CD8-positive, alpha-beta T cell (primary cell): ENCODE measurements at regions of chr3 and their contacts with region 1.

Region 1: GRCh38 chr3:33787328-33788009 is 11.0 kb upstream of the PDCD6IP start:
- DNase-seq: peak; percentile 16 to 83 (median 64)
- ATAC-seq: peak; percentile 87
- H3K4me3 ChIP-seq: no peak overlapping the region
- H3K4me3 Mint-ChIP-seq: peak overlapping the region; percentile 57
- H3K27ac ChIP-seq: no peak overlapping the region
- H3K27ac Mint-ChIP-seq: no peak overlapping the region
- H3K4me1 ChIP-seq: no peaks in the 10 kb centered on the region
- H3K4me1 Mint-ChIP-seq: peaks cover 2% of the 10 kb centered on the region
- H3K27me3 ChIP-seq: peaks cover 0 to 3% of the 10 kb centered on the region in 2 experiments
- H3K27me3 Mint-ChIP-seq: peaks cover 23% of the 10 kb centered on the region
- CTCF ChIP-seq: peak; percentile 89

Region 2: GRCh38 chr3:32947789-32948238 is 839.7 kb before region 1 on chr3:
- CTCF ChIA-PET with region 1: no interaction called
- POLR2A ChIA-PET with region 1: no interaction called
- intact Hi-C with region 1: loop called (anchors 5 to 10 kb)
- DNase-seq: peak; percentile 82 to 96 (median 87)
- ATAC-seq: peak; percentile 79
- H3K4me3 ChIP-seq: no peak overlapping the region
- H3K4me3 Mint-ChIP-seq: no peak overlapping the region
- H3K27ac ChIP-seq: no peak overlapping the region
- H3K27ac Mint-ChIP-seq: no peak overlapping the region
- H3K4me1 ChIP-seq: peaks cover 4% of the 10 kb centered on the region
- H3K4me1 Mint-ChIP-seq: peaks cover 16% of the 10 kb centered on the region
- H3K27me3 ChIP-seq: no peaks in the 10 kb centered on the region
- H3K27me3 Mint-ChIP-seq: no peaks in the 10 kb centered on the region
- CTCF ChIP-seq: peak; percentile 78

Region 3: GRCh38 chr3:33186524-33187367 is 600.7 kb before region 1 on chr3:
- CTCF ChIA-PET with region 1: no interaction called
- POLR2A ChIA-PET with region 1: no interaction called
- intact Hi-C with region 1: no loop called
- DNase-seq: no peak
- ATAC-seq: no peak
- H3K4me3 ChIP-seq: no peak overlapping the region
- H3K4me3 Mint-ChIP-seq: no peak overlapping the region
- H3K27ac ChIP-seq: no peak overlapping the region
- H3K27ac Mint-ChIP-seq: no peak overlapping the region
- H3K4me1 ChIP-seq: no peaks in the 10 kb centered on the region
- H3K4me1 Mint-ChIP-seq: no peaks in the 10 kb centered on the region
- H3K27me3 ChIP-seq: no peaks in the 10 kb centered on the region
- H3K27me3 Mint-ChIP-seq: peaks cover 15% of the 10 kb centered on the region
- CTCF ChIP-seq: no peak

Region 4: GRCh38 chr3:33372218-33373081 is 415.0 kb before region 1 on chr3:
- CTCF ChIA-PET with region 1: interaction called, 3 read pairs
- POLR2A ChIA-PET with region 1: no interaction called
- intact Hi-C with region 1: loop called in 1 of 2 experiments (anchors 2 kb)
- DNase-seq: peak in 8 of 9 experiments; percentile 25 to 60 (median 43)
- ATAC-seq: peak; percentile 62
- H3K4me3 ChIP-seq: no peak overlapping the region
- H3K4me3 Mint-ChIP-seq: no peak overlapping the region
- H3K27ac ChIP-seq: no peak overlapping the region
- H3K27ac Mint-ChIP-seq: no peak overlapping the region
- H3K4me1 ChIP-seq: no peaks in the 10 kb centered on the region
- H3K4me1 Mint-ChIP-seq: peaks cover 3% of the 10 kb centered on the region
- H3K27me3 ChIP-seq: peaks cover 0 to 4% of the 10 kb centered on the region in 2 experiments
- H3K27me3 Mint-ChIP-seq: peaks cover 16% of the 10 kb centered on the region
- CTCF ChIP-seq: peak; percentile 98

Region 5: DNA sequence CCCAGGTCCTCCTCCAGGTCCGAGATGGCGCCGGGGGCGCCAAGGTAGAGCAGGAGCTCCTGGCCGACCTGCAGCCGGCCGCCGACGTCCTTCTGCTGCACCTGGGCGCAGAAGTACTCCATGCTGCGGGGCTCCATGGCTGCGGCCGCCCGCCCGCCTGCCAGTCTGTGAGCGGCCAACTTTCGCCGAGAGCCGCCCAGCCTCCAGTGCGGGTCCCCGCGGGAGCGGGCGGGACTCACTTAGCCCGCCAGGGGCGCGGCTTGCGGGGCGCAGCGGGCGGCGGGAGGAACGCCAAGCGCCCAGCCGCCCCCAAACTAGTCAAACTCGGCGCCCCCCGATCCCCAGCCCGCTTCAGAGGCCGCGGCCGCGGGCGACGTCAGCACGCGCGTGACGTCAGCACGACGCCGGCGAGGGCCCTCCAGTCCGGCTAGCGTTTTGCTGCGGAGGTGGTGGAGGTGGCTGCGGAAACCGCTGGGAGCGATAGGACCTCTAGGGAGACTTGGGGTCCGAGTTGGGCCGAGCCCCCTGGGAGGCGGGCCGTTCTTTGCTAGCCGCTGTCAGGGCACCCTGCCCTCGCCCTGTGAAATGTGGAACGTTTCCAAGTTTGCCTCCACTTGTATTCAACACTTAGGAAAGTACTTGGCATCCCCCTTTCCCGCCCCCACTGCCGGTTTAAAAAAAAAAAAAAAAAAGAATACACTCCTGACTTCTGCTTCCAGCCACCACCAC is 69.4 kb before region 1 on chr3 and contains the start of gene CLASP2:
- CTCF ChIA-PET with region 1: interaction called, 3 read pairs
- POLR2A ChIA-PET with region 1: no interaction called
- intact Hi-C with region 1: loop called (anchors 5 kb)
- DNase-seq: peak; percentile 69 to 95 (median 84)
- ATAC-seq: peak; percentile 79
- H3K4me3 ChIP-seq: peak within 1 kb of the TSS; percentile 81 to 95
- H3K4me3 Mint-ChIP-seq: peak within 1 kb of the TSS; percentile 95
- H3K27ac ChIP-seq: peak within 1 kb of the TSS; percentile 92 to 95
- H3K27ac Mint-ChIP-seq: peak within 1 kb of the TSS; percentile 98
- H3K4me1 ChIP-seq: peaks cover 14% of the 10 kb centered on the region
- H3K4me1 Mint-ChIP-seq: peaks cover 11% of the 10 kb centered on the region
- H3K27me3 ChIP-seq: no peaks in the 10 kb centered on the region
- H3K27me3 Mint-ChIP-seq: no peaks in the 10 kb centered on the region
- CTCF ChIP-seq: no peak
- total RNA-seq, gene CLASP2: 62.6 to 63.2 TPM

Region 6: DNA sequence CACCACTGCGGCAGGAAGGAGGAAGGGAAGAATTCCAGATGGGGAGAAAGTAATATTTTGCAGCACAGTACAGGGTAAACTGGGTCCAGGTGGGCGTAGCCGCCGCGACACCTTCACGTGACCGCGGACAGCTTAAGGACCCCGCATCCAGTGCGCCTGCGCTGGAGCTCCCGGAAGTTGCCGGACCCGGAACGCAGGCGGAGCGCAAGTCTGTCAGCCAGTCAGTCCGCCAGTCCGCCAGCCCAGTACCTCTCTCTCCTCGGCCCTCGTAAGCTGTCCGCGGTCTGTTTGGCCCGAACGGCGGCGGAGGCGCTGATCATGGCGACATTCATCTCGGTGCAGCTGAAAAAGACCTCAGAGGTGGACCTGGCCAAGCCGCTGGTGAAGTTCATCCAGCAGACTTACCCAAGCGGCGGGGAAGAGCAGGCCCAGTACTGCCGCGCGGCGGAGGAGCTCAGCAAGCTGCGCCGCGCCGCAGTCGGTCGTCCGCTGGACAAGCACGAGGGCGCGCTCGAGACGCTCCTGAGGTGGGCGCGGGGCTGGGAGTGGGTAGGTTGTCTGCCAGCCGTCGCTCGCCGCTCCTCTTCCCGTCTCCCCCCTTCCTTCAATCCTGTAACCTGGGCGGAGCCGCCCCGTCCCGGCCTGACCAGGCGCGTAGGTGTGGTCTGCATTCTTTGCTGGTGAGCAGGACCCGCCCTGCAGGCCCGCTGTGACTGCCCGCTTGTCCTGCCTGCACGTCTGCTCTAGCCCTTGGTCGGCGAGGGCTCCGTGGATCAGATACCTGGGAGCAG is 11.1 kb after region 1 on chr3 and contains the start of gene PDCD6IP:
- CTCF ChIA-PET with region 1: interaction called, 44 read pairs
- POLR2A ChIA-PET with region 1: no interaction called
- intact Hi-C with region 1: loop called in 1 of 2 experiments (anchors 1 kb)
- DNase-seq: peak; percentile 76 to 94 (median 86)
- ATAC-seq: peak; percentile 76
- H3K4me3 ChIP-seq: peak within 1 kb of the TSS; percentile 76 to 96
- H3K4me3 Mint-ChIP-seq: peak within 1 kb of the TSS; percentile 97
- H3K27ac ChIP-seq: peak within 1 kb of the TSS; percentile 74 to 90
- H3K27ac Mint-ChIP-seq: peak within 1 kb of the TSS; percentile 98
- H3K4me1 ChIP-seq: peaks cover 32% of the 10 kb centered on the region
- H3K4me1 Mint-ChIP-seq: peaks cover 53% of the 10 kb centered on the region
- H3K27me3 ChIP-seq: no peaks in the 10 kb centered on the region
- H3K27me3 Mint-ChIP-seq: no peaks in the 10 kb centered on the region
- CTCF ChIP-seq: no peak
- total RNA-seq, gene PDCD6IP: 84.7 to 92.4 TPM